ENCODE measurements at regions of chr2 and their contacts with region 1.

Region 1: DNA sequence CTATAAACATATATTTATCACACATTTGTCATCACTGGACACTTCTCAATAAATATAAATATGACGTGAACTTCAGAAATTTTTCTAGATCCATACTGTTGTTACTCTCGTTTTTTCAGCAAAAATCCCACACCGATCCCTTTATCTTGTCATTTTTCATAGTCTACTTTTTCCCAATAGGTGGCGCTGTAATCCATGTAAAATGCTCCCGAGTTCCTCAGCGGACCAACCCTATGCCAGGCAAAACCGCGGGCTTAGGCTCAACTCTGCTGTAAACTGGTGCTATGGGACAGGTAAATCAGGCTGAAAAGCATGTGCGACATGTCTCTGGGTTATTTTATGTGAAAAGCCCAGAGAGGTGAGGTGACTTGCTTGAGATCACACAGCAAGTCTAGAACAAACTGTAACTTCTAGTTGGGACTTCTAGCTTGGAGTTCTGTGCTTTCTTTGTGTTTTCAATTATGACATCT is 104.0 kb downstream of the COBLL1 start:
- DNase-seq: peak; percentile 87
- H3K4me3 ChIP-seq: no peak overlapping the region
- H3K27ac ChIP-seq: no peak overlapping the region
- H3K4me1 ChIP-seq: peaks cover 4% of the 10 kb centered on the region
- H3K27me3 ChIP-seq: no peaks in the 10 kb centered on the region
- CTCF ChIP-seq: peak; percentile 81

Region 2: GRCh38 chr2:164841719-164842623 is 104.3 kb after region 1 on chr2 and contains the start of gene COBLL1:
- CTCF ChIA-PET with region 1: no interaction called
- POLR2A ChIA-PET with region 1: no interaction called
- intact Hi-C with region 1: loop called (anchors 2 kb)
- DNase-seq: peak; percentile 80
- H3K4me3 ChIP-seq: peak within 1 kb of the TSS; percentile 80
- H3K27ac ChIP-seq: peak within 1 kb of the TSS; percentile 82
- H3K4me1 ChIP-seq: peaks cover 31% of the 10 kb centered on the region
- H3K27me3 ChIP-seq: no peaks in the 10 kb centered on the region
- CTCF ChIP-seq: peak; percentile 79
- total RNA-seq, gene COBLL1: 4.2 and 6.6 TPM in 2 replicates

Region 3: GRCh38 chr2:164917296-164917903 is 179.8 kb after region 1 on chr2:
- CTCF ChIA-PET with region 1: interaction called, 4 read pairs
- POLR2A ChIA-PET with region 1: no interaction called
- intact Hi-C with region 1: loop called (anchors 1 kb)
- DNase-seq: peak; percentile 39
- H3K4me3 ChIP-seq: no peak overlapping the region
- H3K27ac ChIP-seq: no peak overlapping the region
- H3K4me1 ChIP-seq: no peaks in the 10 kb centered on the region
- H3K27me3 ChIP-seq: no peaks in the 10 kb centered on the region
- CTCF ChIP-seq: peak; percentile 60

Region 4: GRCh38 chr2:164992818-164993217 is 255.2 kb after region 1 on chr2:
- CTCF ChIA-PET with region 1: interaction called, 3 read pairs
- POLR2A ChIA-PET with region 1: no interaction called
- intact Hi-C with region 1: loop called (anchors 5 kb)
- DNase-seq: peak; percentile 88
- H3K4me3 ChIP-seq: no peak overlapping the region
- H3K27ac ChIP-seq: no peak overlapping the region
- H3K4me1 ChIP-seq: peaks cover 20% of the 10 kb centered on the region
- H3K27me3 ChIP-seq: no peaks in the 10 kb centered on the region
- CTCF ChIP-seq: peak; percentile 63

Region 5: DNA sequence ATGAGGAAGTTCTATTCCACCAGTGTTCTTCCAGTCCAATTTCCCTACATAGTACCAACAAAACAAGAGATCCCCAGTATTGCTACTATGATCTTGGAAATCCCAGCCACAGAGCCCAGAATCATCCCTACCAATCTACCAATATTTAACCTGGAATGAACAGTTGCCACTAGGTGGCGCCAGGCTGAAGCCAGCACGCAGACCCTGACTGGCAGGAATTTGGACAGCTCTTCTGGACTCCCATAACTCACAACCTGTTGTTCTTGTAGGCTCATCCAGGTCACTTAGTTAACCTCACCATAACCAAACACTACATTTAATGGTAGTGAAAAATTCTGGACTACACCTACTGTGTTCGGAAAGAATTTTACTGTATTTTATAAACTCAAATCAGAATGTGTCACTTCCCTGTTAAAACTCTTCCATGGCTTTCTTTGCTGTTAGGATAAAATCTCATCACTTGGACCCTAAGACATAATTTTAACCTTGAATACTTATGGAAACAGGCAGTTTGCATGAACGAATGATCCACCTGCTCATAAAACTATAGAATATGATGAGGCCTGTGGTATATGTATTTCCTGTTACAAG is 277.5 kb after region 1 on chr2:
- CTCF ChIA-PET with region 1: no interaction called
- POLR2A ChIA-PET with region 1: no interaction called
- intact Hi-C with region 1: loop called (anchors 10 kb)
- DNase-seq: peak; percentile 77
- H3K4me3 ChIP-seq: no peak overlapping the region
- H3K27ac ChIP-seq: no peak overlapping the region
- H3K4me1 ChIP-seq: no peaks in the 10 kb centered on the region
- H3K27me3 ChIP-seq: no peaks in the 10 kb centered on the region
- CTCF ChIP-seq: peak; percentile 98

Region 6: DNA sequence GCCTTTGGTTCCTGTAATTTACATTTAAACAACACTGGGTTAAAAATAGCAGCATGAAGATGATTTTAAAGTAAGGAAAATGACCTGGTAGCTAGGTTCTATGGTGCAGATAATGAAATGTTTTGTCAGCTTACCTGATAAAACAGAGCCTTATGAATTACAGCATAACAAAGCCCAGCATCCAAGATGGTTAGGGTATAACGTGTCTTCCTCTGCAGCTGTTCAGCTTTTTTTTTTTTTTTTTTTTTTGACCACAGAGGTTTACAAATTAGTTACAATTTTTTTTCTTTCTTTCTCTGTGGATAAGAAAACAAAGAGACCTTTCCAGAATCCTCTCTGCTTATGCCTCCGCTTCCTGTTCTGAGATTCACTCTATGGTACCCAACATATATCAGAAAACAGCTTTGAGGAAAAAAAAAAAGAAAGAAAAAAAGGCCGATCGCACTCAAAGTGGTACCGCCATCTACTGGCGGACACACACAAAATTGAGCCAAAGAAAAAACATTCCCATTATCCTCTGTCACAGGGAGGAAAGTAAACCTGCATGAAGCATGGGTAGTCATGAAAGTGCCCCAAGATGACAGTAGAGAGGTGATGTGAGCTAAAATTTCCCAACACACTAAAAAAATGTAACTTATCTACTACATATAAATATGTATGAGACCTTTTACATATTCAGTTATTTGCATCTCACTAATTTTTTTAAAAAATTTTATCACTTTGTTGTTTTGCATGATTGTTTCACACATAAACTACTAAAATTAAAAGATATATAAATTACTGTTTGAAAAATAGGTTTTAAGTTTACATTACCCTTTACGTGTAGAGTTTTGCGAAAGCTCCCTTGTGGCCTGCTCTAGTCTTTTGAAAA is 466.3 kb after region 1 on chr2 and contains the start of gene SCN3A:
- CTCF ChIA-PET with region 1: no interaction called
- POLR2A ChIA-PET with region 1: no interaction called
- intact Hi-C with region 1: loop called (anchors 5 kb)
- DNase-seq: peak; percentile 73
- H3K4me3 ChIP-seq: no peak within 1 kb of the TSS
- H3K27ac ChIP-seq: no peak within 1 kb of the TSS
- H3K4me1 ChIP-seq: no peaks in the 10 kb centered on the region
- H3K27me3 ChIP-seq: no peaks in the 10 kb centered on the region
- CTCF ChIP-seq: peak; percentile 88
- total RNA-seq, gene SCN3A: 0.04 and 0.07 TPM in 2 replicates

Region 7: DNA sequence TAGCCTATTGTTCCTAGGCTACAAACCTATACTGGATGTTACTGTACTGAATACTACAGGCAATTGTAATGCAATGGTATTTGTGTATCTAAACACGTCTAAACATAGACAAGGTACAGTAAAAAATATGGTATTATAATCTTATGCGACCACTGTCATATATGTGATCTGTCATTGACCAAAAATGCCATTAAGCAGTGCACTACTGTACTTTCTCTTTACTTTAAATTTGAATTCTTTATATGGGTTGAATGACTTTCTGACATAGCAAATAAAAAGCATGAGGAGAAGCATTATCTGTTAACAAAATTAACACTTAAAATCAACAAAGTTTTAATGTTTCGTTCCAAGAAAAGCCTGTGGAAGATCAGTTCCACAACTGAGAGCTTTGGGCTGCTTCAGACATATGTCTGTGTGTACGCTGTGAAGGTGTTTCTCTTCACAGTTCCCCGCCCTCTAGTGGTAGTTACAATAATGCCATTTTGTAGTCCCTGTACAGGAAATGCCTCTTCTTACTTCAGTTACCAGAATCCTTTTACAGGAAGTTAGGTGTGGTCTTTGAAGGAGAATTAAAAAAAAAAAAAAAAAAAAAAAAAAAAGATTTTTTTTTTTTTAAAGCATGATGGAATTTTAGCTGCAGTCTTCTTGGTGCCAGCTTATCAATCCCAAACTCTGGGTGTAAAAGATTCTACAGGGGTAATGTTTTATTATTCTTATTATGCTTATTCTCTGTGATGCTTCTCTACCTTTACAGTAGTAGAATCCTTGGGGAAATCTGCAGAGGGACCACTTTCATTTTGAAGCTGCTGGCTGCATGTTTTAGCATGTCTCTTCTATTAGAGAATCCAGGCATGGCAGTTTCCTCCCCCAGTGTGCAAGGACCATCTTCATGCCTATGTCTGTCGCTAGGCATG is 556.0 kb after region 1 on chr2:
- CTCF ChIA-PET with region 1: no interaction called
- POLR2A ChIA-PET with region 1: no interaction called
- intact Hi-C with region 1: loop called (anchors 5 kb)
- DNase-seq: peak; percentile 95
- H3K4me3 ChIP-seq: no peak overlapping the region
- H3K27ac ChIP-seq: no peak overlapping the region
- H3K4me1 ChIP-seq: peaks cover 11% of the 10 kb centered on the region
- H3K27me3 ChIP-seq: no peaks in the 10 kb centered on the region
- CTCF ChIP-seq: peak; percentile 81

Region 8: DNA sequence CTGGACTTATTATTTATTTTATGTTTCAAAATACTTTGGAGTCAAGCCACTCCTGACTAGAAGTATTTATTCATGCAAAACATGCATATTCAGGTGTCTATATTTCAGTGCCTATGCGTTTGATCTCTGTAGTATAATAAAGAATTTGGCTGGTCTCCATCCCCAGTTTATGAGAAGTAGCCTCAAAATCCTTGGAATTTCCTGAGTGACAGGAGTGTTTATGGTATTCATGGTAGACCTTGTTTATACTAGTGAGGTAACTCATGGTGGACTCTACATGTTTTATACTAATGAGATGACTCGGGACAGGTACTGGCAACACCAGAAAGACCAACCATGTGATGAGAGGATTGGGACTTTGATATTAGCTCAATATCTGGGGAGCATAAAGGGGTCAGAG is 687.9 kb after region 1 on chr2:
- CTCF ChIA-PET with region 1: no interaction called
- POLR2A ChIA-PET with region 1: no interaction called
- intact Hi-C with region 1: no loop called
- DNase-seq: no peak
- H3K4me3 ChIP-seq: no peak overlapping the region
- H3K27ac ChIP-seq: no peak overlapping the region
- H3K4me1 ChIP-seq: peaks cover 4% of the 10 kb centered on the region
- H3K27me3 ChIP-seq: no peaks in the 10 kb centered on the region
- CTCF ChIP-seq: no peak

Measured in A673 (cell line).